HAP-1 (cell line): ENCODE measurements at regions of chr3 and their contacts with region 1.

Region 1: GRCh38 chr3:131794766-131795388 is 239.9 kb downstream of the CPNE4 start:
- DNase-seq: peak; percentile 42 to 57
- H3K4me3 ChIP-seq: no peak overlapping the region
- H3K4me1 ChIP-seq: no peaks in the 10 kb centered on the region; the same call in 1 of the 2 replicates
- H3K27me3 ChIP-seq: no peaks in the 10 kb centered on the region

Region 2: DNA sequence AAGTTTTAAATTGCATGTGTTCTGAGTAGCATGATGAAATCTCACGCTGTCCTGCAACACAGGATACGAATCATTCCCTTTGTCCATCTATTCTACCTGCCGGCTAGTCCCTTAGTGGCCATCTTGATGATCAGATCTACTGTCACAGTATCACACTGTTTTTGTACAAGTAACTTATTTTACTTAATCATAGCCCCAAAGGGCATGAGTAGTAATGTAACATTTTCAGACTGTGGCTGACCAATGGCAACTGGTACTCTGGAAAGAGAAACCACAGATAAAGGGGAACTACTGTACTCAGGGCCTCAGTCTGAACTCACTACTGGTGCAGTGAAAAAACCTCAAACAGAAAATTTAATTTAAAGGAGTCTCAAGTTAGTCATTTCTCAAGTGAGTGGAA is 164.8 kb before region 1 on chr3:
- in situ Hi-C with region 1: no loop called
- DNase-seq: no peak
- H3K4me3 ChIP-seq: no peak overlapping the region
- H3K4me1 ChIP-seq: no peaks in the 10 kb centered on the region
- H3K27me3 ChIP-seq: no peaks in the 10 kb centered on the region

Region 3: GRCh38 chr3:132034486-132035464 is 239.9 kb after region 1 on chr3 and contains the start of gene CPNE4:
- in situ Hi-C with region 1: loop called (anchors 10 kb)
- DNase-seq: peak; percentile 67 to 95
- H3K4me3 ChIP-seq: peak within 1 kb of the TSS; percentile 17
- H3K4me1 ChIP-seq: peaks cover 4% of the 10 kb centered on the region; the same call in 1 of the 2 replicates
- H3K27me3 ChIP-seq: peaks cover 47% of the 10 kb centered on the region